Activated T-helper 1 cell treated with anti-CD3 and anti-CD28 coated beads, Interleukin-12 subunit alpha, Interleukin-12 subunit beta, Interleukin-2, Interleukin-4 antibody, amounts not matched to agents 30 ng/mL and 10 ng/mL and 1 ng/mL, durations not matched to agents 14 hours and 24 hours and 36 hours (primary cell): ENCODE measurements at regions of chr5 and their contacts with region 1.

Region 1: GRCh38 chr5:175873088-175873454 is 1.7 kb downstream of the CPLX2 start:
- DNase-seq: no peak
- H3K4me3 Mint-ChIP-seq: no peak overlapping the region
- H3K27ac Mint-ChIP-seq: no peak overlapping the region
- H3K4me1 Mint-ChIP-seq: peaks cover 5% of the 10 kb centered on the region
- H3K27me3 Mint-ChIP-seq: peaks cover 51% of the 10 kb centered on the region

Region 2: DNA sequence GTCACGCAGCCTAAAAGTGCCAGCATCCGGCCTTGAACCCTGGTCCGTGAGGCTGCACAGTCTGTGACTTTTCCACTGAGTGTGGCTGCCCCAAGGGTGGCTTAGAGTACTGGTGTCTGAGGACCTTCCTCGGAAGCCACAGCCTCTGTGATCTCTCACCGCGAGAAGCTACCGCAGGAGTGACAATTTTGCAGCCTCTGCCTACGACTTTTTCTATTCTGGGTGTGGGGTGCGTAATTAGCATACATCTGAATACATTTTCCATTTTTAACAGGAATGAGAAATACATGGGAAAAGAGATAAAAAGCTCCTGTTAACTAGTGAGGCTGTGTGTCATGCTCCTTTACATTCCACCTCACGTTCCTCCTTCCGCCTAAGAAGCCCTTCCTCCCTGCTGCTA is 263.5 kb before region 1 on chr5:
- intact Hi-C with region 1: no loop called
- DNase-seq: no peak
- H3K4me3 Mint-ChIP-seq: no peak overlapping the region
- H3K27ac Mint-ChIP-seq: no peak overlapping the region
- H3K4me1 Mint-ChIP-seq: peaks cover 8% of the 10 kb centered on the region
- H3K27me3 Mint-ChIP-seq: peaks cover 20% of the 10 kb centered on the region

Region 3: DNA sequence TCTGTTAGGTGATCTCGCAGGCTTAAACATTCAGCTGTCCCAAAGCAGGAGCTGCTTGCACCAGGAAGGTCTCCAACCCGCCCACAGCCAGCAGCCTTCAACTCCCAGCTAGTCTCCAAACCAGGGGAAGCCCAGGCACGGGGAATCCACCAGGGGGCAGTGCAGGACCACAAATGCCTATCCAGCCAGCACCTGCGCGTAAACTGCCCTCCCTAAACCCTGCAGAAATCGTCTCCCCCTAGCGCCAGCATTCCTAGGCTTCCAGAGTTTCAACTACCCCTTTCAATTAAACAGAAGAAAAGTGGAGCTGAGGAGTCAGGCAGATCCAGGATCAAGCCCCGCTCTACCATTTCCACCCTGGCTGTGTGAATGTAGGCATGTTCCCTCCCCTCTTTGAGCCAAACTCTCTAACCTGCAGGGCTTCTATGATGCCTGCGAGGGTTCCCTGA is 143.2 kb before region 1 on chr5:
- intact Hi-C with region 1: loop called (anchors 1 kb)
- DNase-seq: peak; percentile 80
- H3K4me3 Mint-ChIP-seq: no peak overlapping the region
- H3K27ac Mint-ChIP-seq: no peak overlapping the region
- H3K4me1 Mint-ChIP-seq: peaks cover 6% of the 10 kb centered on the region
- H3K27me3 Mint-ChIP-seq: peaks cover 18% of the 10 kb centered on the region

Region 4: GRCh38 chr5:175796536-175797499 is 76.3 kb before region 1 on chr5:
- intact Hi-C with region 1: loop called (anchors 1 kb)
- DNase-seq: peak; percentile 78
- H3K4me3 Mint-ChIP-seq: no peak overlapping the region
- H3K27ac Mint-ChIP-seq: no peak overlapping the region
- H3K4me1 Mint-ChIP-seq: no peaks in the 10 kb centered on the region
- H3K27me3 Mint-ChIP-seq: peaks cover 31% of the 10 kb centered on the region

Region 5: GRCh38 chr5:175861337-175862130 is 11.5 kb before region 1 on chr5:
- intact Hi-C with region 1: no loop called
- DNase-seq: no peak
- H3K4me3 Mint-ChIP-seq: no peak overlapping the region
- H3K27ac Mint-ChIP-seq: no peak overlapping the region
- H3K4me1 Mint-ChIP-seq: no peaks in the 10 kb centered on the region
- H3K27me3 Mint-ChIP-seq: no peaks in the 10 kb centered on the region

Region 6: DNA sequence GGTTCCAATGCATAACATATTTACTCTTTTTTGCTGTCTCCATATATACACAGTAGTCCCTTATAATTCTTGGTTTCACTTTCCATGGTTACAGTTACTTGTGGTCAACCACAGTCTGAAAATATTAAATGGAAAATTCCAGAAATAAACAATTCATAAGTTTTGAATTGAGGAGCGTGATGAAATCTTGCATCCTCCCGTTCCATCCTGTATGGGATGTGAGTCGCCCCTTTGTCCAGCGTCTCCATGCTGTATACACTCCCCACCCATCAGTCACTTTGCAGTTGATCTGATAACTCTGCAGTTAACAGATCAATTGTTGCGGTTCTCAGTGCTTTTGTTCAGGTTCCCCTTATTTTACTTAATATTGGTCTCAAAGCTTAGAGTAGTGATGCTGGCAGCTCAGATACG is 563.6 kb after region 1 on chr5:
- intact Hi-C with region 1: no loop called
- DNase-seq: no peak
- H3K4me3 Mint-ChIP-seq: peak overlapping the region; percentile 53
- H3K27ac Mint-ChIP-seq: peak overlapping the region; percentile 20
- H3K4me1 Mint-ChIP-seq: peaks cover 11% of the 10 kb centered on the region
- H3K27me3 Mint-ChIP-seq: peaks cover 4% of the 10 kb centered on the region